CD4-positive, alpha-beta T cell (primary cell): ENCODE measurements at regions of chr15 and their contacts with region 1.

Region 1: GRCh38 chr15:75809986-75810750 is 33.1 kb upstream of the UBE2Q2 start:
- DNase-seq: peak in 5 of 14 experiments; percentile 3 to 47 (median 29)
- ATAC-seq: no peak
- H3K4me3 ChIP-seq: no peak overlapping the region
- H3K4me3 Mint-ChIP-seq: no peak overlapping the region
- H3K27ac ChIP-seq: no peak overlapping the region
- H3K27ac Mint-ChIP-seq: no peak overlapping the region
- H3K4me1 ChIP-seq: no peaks in the 10 kb centered on the region
- H3K4me1 Mint-ChIP-seq: no peaks in the 10 kb centered on the region
- H3K27me3 ChIP-seq: peaks cover 0 to 4% of the 10 kb centered on the region in 2 experiments
- H3K27me3 Mint-ChIP-seq: no peaks in the 10 kb centered on the region
- CTCF ChIP-seq: no peak

Region 2: DNA sequence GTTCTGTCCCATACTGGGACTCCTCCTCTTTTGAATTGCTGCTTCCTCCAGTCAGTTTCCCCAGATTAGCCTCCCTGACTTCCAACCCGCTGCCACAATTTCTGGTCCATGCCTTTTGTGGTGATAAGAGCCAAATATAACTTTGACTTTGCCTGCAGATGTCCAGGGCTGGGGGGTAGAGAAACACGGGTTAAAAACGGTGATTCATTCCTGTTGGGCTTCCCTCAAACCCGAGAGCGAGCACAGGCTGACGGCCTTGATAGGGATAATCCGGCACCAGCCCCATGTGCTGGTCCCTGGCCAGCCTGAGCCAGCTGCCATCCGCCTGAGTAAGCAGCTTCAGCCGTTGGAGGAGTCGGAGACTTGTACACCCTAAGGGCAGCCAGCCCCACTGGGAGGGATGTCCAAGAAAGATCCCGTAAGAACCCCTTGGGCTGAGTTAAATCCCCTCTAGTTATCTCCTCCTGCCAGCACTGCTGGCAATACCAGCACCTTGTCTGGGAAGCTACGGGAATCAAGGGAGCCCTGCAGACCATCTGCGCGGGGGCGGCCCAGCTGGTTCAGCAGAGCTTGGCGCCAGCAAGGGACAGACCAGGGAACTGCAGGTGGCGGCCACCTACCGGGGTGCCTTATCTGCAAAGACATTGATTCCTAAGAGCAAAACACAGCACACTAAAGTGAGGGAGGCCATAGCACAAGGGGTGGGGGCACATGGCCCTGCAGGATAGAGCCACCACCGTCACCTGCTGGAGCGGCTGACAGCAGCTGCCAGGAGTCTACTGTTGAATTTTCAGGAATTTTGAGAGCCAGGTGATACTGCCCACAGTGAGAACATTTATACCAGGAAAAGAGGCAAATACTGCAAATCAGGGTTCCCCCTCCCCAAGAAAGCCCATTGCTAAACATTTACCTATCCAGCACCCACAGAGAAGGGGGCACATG is 115.7 kb before region 1 on chr15:
- CTCF ChIA-PET with region 1: no interaction called
- POLR2A ChIA-PET with region 1: no interaction called
- intact Hi-C with region 1: no loop called
- DNase-seq: no peak
- ATAC-seq: no peak
- H3K4me3 ChIP-seq: no peak overlapping the region
- H3K4me3 Mint-ChIP-seq: no peak overlapping the region
- H3K27ac ChIP-seq: no peak overlapping the region
- H3K27ac Mint-ChIP-seq: no peak overlapping the region
- H3K4me1 ChIP-seq: peaks cover 4% of the 10 kb centered on the region
- H3K4me1 Mint-ChIP-seq: peaks cover 7% of the 10 kb centered on the region
- H3K27me3 ChIP-seq: peaks cover 4% of the 10 kb centered on the region in 2 experiments
- H3K27me3 Mint-ChIP-seq: peaks cover 21% of the 10 kb centered on the region
- CTCF ChIP-seq: no peak

Region 3: GRCh38 chr15:75790631-75791336 is 19.4 kb before region 1 on chr15:
- CTCF ChIA-PET with region 1: no interaction called
- POLR2A ChIA-PET with region 1: no interaction called
- intact Hi-C with region 1: no loop called
- DNase-seq: no peak
- ATAC-seq: no peak
- H3K4me3 ChIP-seq: no peak overlapping the region
- H3K4me3 Mint-ChIP-seq: no peak overlapping the region
- H3K27ac ChIP-seq: no peak overlapping the region
- H3K27ac Mint-ChIP-seq: no peak overlapping the region
- H3K4me1 ChIP-seq: no peaks in the 10 kb centered on the region
- H3K4me1 Mint-ChIP-seq: no peaks in the 10 kb centered on the region
- H3K27me3 ChIP-seq: peaks cover 0 to 4% of the 10 kb centered on the region in 2 experiments
- H3K27me3 Mint-ChIP-seq: no peaks in the 10 kb centered on the region
- CTCF ChIP-seq: no peak

Region 4: GRCh38 chr15:75921729-75922703 is 111.8 kb after region 1 on chr15:
- CTCF ChIA-PET with region 1: no interaction called
- POLR2A ChIA-PET with region 1: no interaction called
- intact Hi-C with region 1: loop called in 1 of 2 experiments (anchors 5 kb)
- DNase-seq: peak in 5 of 14 experiments; percentile 5 to 66 (median 34)
- ATAC-seq: peak; percentile 67
- H3K4me3 ChIP-seq: no peak overlapping the region
- H3K4me3 Mint-ChIP-seq: no peak overlapping the region
- H3K27ac ChIP-seq: no peak overlapping the region
- H3K27ac Mint-ChIP-seq: no peak overlapping the region
- H3K4me1 ChIP-seq: no peaks in the 10 kb centered on the region
- H3K4me1 Mint-ChIP-seq: peaks cover 22% of the 10 kb centered on the region
- H3K27me3 ChIP-seq: no peaks in the 10 kb centered on the region
- H3K27me3 Mint-ChIP-seq: no peaks in the 10 kb centered on the region
- CTCF ChIP-seq: peak; percentile 33

Region 5: GRCh38 chr15:76057332-76058000 is 247.3 kb after region 1 on chr15:
- CTCF ChIA-PET with region 1: no interaction called
- POLR2A ChIA-PET with region 1: no interaction called
- intact Hi-C with region 1: loop called in 1 of 2 experiments (anchors 10 kb)
- DNase-seq: peak in 7 of 14 experiments; percentile 7 to 72 (median 42)
- ATAC-seq: peak; percentile 51
- H3K4me3 ChIP-seq: no peak overlapping the region
- H3K4me3 Mint-ChIP-seq: no peak overlapping the region
- H3K27ac ChIP-seq: no peak overlapping the region
- H3K27ac Mint-ChIP-seq: no peak overlapping the region
- H3K4me1 ChIP-seq: peaks cover 20% of the 10 kb centered on the region
- H3K4me1 Mint-ChIP-seq: peaks cover 23% of the 10 kb centered on the region
- H3K27me3 ChIP-seq: peaks cover 31 to 53% of the 10 kb centered on the region in 2 experiments
- H3K27me3 Mint-ChIP-seq: peaks cover 61% of the 10 kb centered on the region
- CTCF ChIP-seq: peak; percentile 82